Naive thymus-derived CD4-positive, alpha-beta T cell (primary cell): ENCODE measurements at regions of chr15 and their contacts with region 1.

Region 1: GRCh38 chr15:56245871-56246814 is 2.5 kb upstream of the RFX7 start:
- DNase-seq: peak; percentile 76 to 89 (median 85)
- ATAC-seq: peak; percentile 90
- H3K4me3 ChIP-seq: peak overlapping the region; percentile 90
- H3K4me3 Mint-ChIP-seq: peak overlapping the region; percentile 75 to 96 (median 88)
- H3K27ac ChIP-seq: peak overlapping the region; percentile 65
- H3K27ac Mint-ChIP-seq: peak overlapping the region; percentile 55 to 99 (median 93)
- H3K4me1 ChIP-seq: peaks cover 11 to 15% of the 10 kb centered on the region in 2 donors
- H3K4me1 Mint-ChIP-seq: peaks cover 14 to 40% (median 35%) of the 10 kb centered on the region in 7 donors
- H3K27me3 ChIP-seq: no peaks in the 10 kb centered on the region
- H3K27me3 Mint-ChIP-seq: peaks cover 0 to 5% (median 0%) of the 10 kb centered on the region in 5 donors

Region 2: GRCh38 chr15:55407949-55408791 is 838.0 kb before region 1 on chr15 and contains the starts of genes CCPG1 and PIERCE2:
- CTCF ChIA-PET with region 1: no interaction called
- POLR2A ChIA-PET with region 1: interaction called, 4 read pairs
- intact Hi-C with region 1: loop called (anchors 2 to 5 kb)
- DNase-seq: peak; percentile 80 to 89 (median 85)
- ATAC-seq: peak; percentile 95
- H3K4me3 ChIP-seq: peak within 1 kb of the TSS; percentile 70
- H3K4me3 Mint-ChIP-seq: peak within 1 kb of the TSS; percentile 88 to 97 (median 94)
- H3K27ac ChIP-seq: peak within 1 kb of the TSS; percentile 86
- H3K27ac Mint-ChIP-seq: peak within 1 kb of the TSS; percentile 82 to 97 (median 89)
- H3K4me1 ChIP-seq: peaks cover 12 to 20% of the 10 kb centered on the region in 2 donors
- H3K4me1 Mint-ChIP-seq: peaks cover 18 to 52% (median 37%) of the 10 kb centered on the region in 7 donors
- H3K27me3 ChIP-seq: no peaks in the 10 kb centered on the region
- H3K27me3 Mint-ChIP-seq: peaks cover 0 to 2% (median 0%) of the 10 kb centered on the region in 5 donors
- total RNA-seq, gene CCPG1: 17.9 to 40.9 (median 28.4) TPM
- total RNA-seq, gene PIERCE2: 0.42 TPM in 1 of 5 experiments, not detected in the others

Region 3: DNA sequence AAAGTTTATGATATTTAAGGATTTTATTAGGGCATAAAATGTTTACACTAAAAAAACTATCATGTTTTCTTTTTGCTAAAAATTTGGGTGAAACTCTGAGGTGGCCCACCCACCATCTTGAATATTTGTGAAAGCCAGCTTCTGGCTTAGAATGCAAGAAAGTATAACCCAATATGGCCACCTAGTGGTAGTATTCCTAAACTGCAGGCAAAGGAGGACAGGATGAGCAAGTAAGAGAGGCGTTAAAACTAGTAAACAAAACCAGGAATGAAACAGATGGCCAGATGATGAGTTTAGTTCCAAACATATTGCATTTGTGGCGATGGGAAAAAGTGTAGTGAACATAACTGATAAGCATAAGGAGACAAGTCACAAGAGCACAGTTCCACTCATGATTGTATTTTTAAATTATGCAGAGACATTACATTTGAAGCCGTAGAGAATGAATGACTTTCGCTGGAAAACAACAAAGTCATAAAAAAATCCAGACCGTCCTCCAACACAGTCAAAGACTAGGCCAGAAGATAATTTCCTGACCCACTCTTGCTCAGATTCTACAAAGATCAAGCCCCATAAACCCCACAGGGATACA is 399.9 kb before region 1 on chr15:
- CTCF ChIA-PET with region 1: no interaction called
- POLR2A ChIA-PET with region 1: no interaction called
- intact Hi-C with region 1: loop called in 1 of 2 experiments (anchors 5 kb)
- DNase-seq: peak in 8 of 9 donors; percentile 19 to 65 (median 52)
- ATAC-seq: peak; percentile 75
- H3K4me3 ChIP-seq: no peak overlapping the region
- H3K4me3 Mint-ChIP-seq: no peak overlapping the region
- H3K27ac ChIP-seq: no peak overlapping the region
- H3K27ac Mint-ChIP-seq: no peak overlapping the region
- H3K4me1 ChIP-seq: no peaks in the 10 kb centered on the region
- H3K4me1 Mint-ChIP-seq: peaks cover 0 to 3% (median 0%) of the 10 kb centered on the region in 7 donors
- H3K27me3 ChIP-seq: no peaks in the 10 kb centered on the region
- H3K27me3 Mint-ChIP-seq: no peaks in the 10 kb centered on the region

Region 4: GRCh38 chr15:56082311-56082710 is 163.8 kb before region 1 on chr15:
- CTCF ChIA-PET with region 1: interaction called, 3 read pairs
- POLR2A ChIA-PET with region 1: no interaction called
- intact Hi-C with region 1: loop called in 1 of 2 experiments (anchors 10 kb)
- DNase-seq: no peak
- ATAC-seq: no peak
- H3K4me3 ChIP-seq: no peak overlapping the region
- H3K4me3 Mint-ChIP-seq: no peak overlapping the region
- H3K27ac ChIP-seq: no peak overlapping the region
- H3K27ac Mint-ChIP-seq: no peak overlapping the region
- H3K4me1 ChIP-seq: no peaks in the 10 kb centered on the region
- H3K4me1 Mint-ChIP-seq: peaks cover 0 to 7% (median 4%) of the 10 kb centered on the region in 7 donors
- H3K27me3 ChIP-seq: no peaks in the 10 kb centered on the region
- H3K27me3 Mint-ChIP-seq: peaks cover 0 to 15% (median 4%) of the 10 kb centered on the region in 5 donors

Region 5: GRCh38 chr15:56228854-56229253 is 17.3 kb before region 1 on chr15:
- CTCF ChIA-PET with region 1: no interaction called
- POLR2A ChIA-PET with region 1: no interaction called
- intact Hi-C with region 1: no loop called
- DNase-seq: no peak
- ATAC-seq: no peak
- H3K4me3 ChIP-seq: no peak overlapping the region
- H3K4me3 Mint-ChIP-seq: no peak overlapping the region
- H3K27ac ChIP-seq: no peak overlapping the region
- H3K27ac Mint-ChIP-seq: no peak overlapping the region
- H3K4me1 ChIP-seq: no peaks in the 10 kb centered on the region
- H3K4me1 Mint-ChIP-seq: peaks cover 7 to 32% (median 15%) of the 10 kb centered on the region in 7 donors
- H3K27me3 ChIP-seq: no peaks in the 10 kb centered on the region
- H3K27me3 Mint-ChIP-seq: no peaks in the 10 kb centered on the region

Region 6: GRCh38 chr15:56295433-56295832 is 49.3 kb after region 1 on chr15:
- CTCF ChIA-PET with region 1: no interaction called
- POLR2A ChIA-PET with region 1: no interaction called
- intact Hi-C with region 1: no loop called
- DNase-seq: no peak
- ATAC-seq: no peak
- H3K4me3 ChIP-seq: no peak overlapping the region
- H3K4me3 Mint-ChIP-seq: no peak overlapping the region
- H3K27ac ChIP-seq: no peak overlapping the region
- H3K27ac Mint-ChIP-seq: no peak overlapping the region
- H3K4me1 ChIP-seq: no peaks in the 10 kb centered on the region
- H3K4me1 Mint-ChIP-seq: no peaks in the 10 kb centered on the region
- H3K27me3 ChIP-seq: no peaks in the 10 kb centered on the region
- H3K27me3 Mint-ChIP-seq: peaks cover 0 to 6% (median 0%) of the 10 kb centered on the region in 5 donors

Region 7: DNA sequence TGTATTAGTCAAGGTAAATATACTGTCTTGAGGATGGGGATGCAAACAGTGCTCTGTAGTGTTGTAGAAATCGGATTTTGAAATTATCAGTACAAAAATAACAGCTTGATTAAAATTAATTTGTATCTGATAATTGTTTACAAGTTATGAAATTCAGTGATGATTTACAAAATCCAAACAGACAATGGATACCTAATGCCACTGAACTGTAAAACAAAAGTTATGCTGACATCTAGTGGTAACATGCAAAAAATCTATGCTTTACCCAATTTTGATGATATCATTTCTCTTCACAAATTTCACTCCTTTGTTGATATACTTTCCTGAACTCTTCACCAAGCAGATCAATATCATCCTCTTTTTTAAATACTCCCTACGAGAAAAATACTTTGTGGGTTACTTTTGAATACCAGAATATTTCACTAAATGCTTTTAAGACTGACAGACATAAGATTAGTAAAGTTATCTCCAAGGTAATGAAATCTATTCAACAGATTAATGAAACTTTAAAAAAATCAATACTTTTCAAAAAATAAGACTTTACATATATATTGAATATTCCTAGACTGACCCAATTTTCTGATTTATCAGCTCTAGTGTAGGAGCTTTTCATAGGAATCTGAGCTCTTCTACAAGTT is 182.8 kb after region 1 on chr15:
- CTCF ChIA-PET with region 1: no interaction called
- POLR2A ChIA-PET with region 1: no interaction called
- intact Hi-C with region 1: loop called (anchors 1 kb)
- DNase-seq: peak in 3 of 9 donors; percentile 4 to 15 (median 5)
- ATAC-seq: no peak
- H3K4me3 ChIP-seq: no peak overlapping the region
- H3K4me3 Mint-ChIP-seq: no peak overlapping the region
- H3K27ac ChIP-seq: no peak overlapping the region
- H3K27ac Mint-ChIP-seq: no peak overlapping the region
- H3K4me1 ChIP-seq: no peaks in the 10 kb centered on the region
- H3K4me1 Mint-ChIP-seq: no peaks in the 10 kb centered on the region
- H3K27me3 ChIP-seq: peaks cover 0 to 5% of the 10 kb centered on the region in 2 donors
- H3K27me3 Mint-ChIP-seq: peaks cover 0 to 20% (median 9%) of the 10 kb centered on the region in 5 donors

Region 8: DNA sequence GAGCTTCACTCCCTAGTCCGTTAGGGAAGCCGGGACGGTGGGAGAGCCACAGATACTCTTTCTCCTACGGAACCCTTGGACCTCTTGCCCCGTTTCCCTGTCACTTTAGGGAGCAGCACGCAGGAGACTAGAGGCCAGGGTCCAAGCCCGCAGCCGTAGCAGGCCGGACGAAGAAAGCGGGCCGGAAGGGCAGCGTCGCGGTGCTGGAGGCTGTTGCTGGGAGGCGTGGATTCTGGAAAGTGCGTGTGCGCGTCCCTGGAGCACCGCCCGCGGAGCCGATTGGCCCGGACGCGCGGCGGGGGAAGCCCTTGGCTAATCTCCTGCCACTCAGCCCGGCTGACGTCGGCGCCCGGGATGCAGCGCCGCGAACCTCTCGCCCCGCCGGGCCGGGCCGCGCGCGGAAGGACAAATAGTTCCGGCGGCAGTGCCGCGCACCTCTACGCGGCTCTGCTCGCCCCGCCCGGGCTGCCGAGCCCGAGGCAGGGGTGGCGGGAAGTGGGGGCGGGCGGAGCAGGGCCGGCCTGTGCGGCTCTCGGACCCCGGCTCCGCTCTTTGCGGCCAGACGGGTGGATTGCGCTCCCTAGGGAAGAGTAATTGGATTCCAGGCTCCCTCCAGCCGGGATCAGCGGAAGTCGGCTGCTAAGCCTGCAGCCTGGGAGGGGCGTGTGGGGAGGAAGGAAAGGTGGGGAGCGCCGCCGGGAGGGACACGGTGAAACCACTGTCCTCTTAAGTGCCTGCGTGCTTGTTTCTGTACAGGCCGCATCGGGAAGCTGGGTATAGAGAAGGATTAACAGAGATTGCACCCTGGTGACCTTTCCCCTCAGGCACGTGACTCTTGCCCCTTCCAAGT is 641.0 kb after region 1 on chr15:
- CTCF ChIA-PET with region 1: no interaction called
- POLR2A ChIA-PET with region 1: no interaction called
- intact Hi-C with region 1: loop called in 1 of 2 experiments (anchors 10 kb)
- DNase-seq: peak; percentile 74 to 86 (median 80)
- ATAC-seq: peak; percentile 91
- H3K4me3 ChIP-seq: peak overlapping the region; percentile 80
- H3K4me3 Mint-ChIP-seq: peak overlapping the region; percentile 82 to 96 (median 88)
- H3K27ac ChIP-seq: peak overlapping the region; percentile 86
- H3K27ac Mint-ChIP-seq: peak overlapping the region; percentile 80 to 98 (median 93)
- H3K4me1 ChIP-seq: peaks cover 9 to 12% of the 10 kb centered on the region in 2 donors
- H3K4me1 Mint-ChIP-seq: peaks cover 17 to 35% (median 26%) of the 10 kb centered on the region in 7 donors
- H3K27me3 ChIP-seq: no peaks in the 10 kb centered on the region
- H3K27me3 Mint-ChIP-seq: peaks cover 0 to 8% (median 0%) of the 10 kb centered on the region in 5 donors